PC-9 (cell line): ENCODE measurements at regions of chr19 and their contacts with region 1.

Region 1: GRCh38 chr19:43265664-43266025 is 3.7 kb downstream of the PSG9 start:
- DNase-seq: peak in 1 of 2 experiments; percentile 49
- H3K4me3 ChIP-seq: peak overlapping the region; percentile 12; the same call in 1 of the 2 replicates
- H3K27ac ChIP-seq: peak overlapping the region; percentile 99
- H3K4me1 ChIP-seq: peaks cover 48% of the 10 kb centered on the region
- H3K27me3 ChIP-seq: no peaks in the 10 kb centered on the region
- CTCF ChIP-seq: no peak

Region 2: DNA sequence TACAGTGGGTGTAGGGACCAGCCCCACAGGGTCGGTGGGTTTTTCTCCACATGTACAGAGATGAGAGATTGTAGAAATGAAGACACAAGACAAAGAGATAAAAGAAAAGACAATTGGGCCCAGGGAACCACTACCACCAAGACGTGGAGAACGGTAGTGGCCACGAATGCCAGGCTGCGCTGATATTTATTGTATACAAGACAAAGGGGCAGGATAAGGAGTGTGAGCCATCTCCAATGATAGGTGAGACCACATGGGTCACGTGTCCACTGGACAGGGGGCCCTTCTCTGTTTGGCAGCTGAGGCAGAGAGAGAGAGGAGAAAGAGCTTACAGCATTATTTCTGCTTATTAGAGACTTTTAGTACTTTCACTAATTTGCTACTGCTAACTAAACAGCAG is 74.5 kb before region 1 on chr19:
- CTCF ChIA-PET with region 1: interaction called, 3 read pairs
- POLR2A ChIA-PET with region 1: no interaction called
- intact Hi-C with region 1: loop called (anchors 2 kb)
- DNase-seq: no peak
- H3K4me3 ChIP-seq: no peak overlapping the region
- H3K27ac ChIP-seq: no peak overlapping the region
- H3K4me1 ChIP-seq: no peaks in the 10 kb centered on the region
- H3K27me3 ChIP-seq: no peaks in the 10 kb centered on the region
- CTCF ChIP-seq: no peak

Region 3: DNA sequence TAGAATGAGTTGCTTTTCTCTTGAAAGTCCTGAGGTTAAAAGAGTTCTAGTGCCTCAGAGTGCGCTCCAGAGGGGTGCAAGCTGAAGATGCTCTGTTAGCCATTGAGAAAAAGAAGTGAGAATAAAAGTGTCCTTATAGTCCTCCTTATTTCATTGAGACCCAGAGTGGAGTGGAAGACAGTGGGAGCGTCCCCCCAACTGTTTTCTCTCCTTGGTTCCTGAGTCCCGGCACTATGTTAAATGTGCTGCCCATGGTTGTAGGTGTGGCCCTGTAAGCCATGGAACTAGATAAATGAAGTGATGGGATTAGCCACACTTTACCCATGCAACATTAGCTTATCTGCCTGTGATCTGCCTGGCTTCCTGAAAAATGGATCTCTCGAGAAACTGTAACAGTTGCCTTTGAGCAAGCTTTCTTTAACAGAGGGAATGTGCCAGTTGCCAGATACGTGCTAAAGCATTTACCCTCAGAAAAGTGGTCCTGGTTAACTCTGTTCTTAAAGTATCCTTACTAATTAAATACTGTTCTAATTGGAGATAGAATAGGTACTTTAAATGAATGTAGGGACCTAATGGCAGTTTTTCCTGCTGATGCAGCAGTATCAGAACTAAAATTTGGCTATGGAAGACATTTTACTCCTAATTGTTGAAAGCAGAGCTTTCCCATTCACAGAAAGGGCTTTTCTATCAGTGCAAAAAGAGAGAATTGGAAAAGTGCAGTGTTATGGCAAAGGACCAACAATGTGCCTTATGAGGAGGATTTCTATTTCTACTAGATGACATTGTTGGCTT is 25.1 kb after region 1 on chr19:
- CTCF ChIA-PET with region 1: no interaction called
- POLR2A ChIA-PET with region 1: no interaction called
- intact Hi-C with region 1: no loop called
- DNase-seq: no peak
- H3K4me3 ChIP-seq: no peak overlapping the region
- H3K27ac ChIP-seq: no peak overlapping the region
- H3K4me1 ChIP-seq: peaks cover 5% of the 10 kb centered on the region; the same call in 1 of the 2 replicates
- H3K27me3 ChIP-seq: no peaks in the 10 kb centered on the region
- CTCF ChIP-seq: no peak

Region 4: GRCh38 chr19:43300876-43301765 is 35.5 kb after region 1 on chr19:
- CTCF ChIA-PET with region 1: no interaction called
- POLR2A ChIA-PET with region 1: no interaction called
- intact Hi-C with region 1: no loop called
- DNase-seq: peak; percentile 50 to 92
- H3K4me3 ChIP-seq: no peak overlapping the region
- H3K27ac ChIP-seq: peak overlapping the region; percentile 88
- H3K4me1 ChIP-seq: peaks cover 50% of the 10 kb centered on the region
- H3K27me3 ChIP-seq: no peaks in the 10 kb centered on the region
- CTCF ChIP-seq: no peak

Region 5: DNA sequence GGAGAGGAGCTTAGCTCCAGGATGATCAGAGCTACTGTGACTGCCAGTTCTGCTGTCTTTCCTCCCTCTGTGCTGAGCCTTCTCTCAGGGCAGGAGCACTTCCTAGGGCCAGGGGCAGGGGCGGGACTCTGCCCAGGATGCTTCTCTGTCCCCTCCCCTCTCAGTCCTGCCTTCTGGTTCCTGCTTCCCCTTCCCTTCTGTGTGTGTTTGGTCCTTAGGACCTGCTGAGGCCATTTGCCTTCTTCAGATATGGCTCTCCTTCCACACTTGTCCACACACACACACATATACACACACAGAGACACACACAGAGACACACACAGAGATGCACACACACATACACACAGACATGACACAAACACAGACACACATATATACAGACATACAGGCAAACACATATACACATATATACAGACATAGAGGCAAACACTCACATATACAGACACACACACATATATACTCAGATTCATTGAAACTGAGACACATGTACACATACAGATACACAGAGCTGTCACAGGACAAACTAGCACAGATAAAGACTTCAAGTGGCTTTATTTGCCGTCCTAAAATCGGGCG is 65.9 kb after region 1 on chr19:
- CTCF ChIA-PET with region 1: no interaction called
- POLR2A ChIA-PET with region 1: no interaction called
- intact Hi-C with region 1: loop called (anchors 5 kb)
- DNase-seq: no peak
- H3K4me3 ChIP-seq: peak overlapping the region; percentile 94; the same call in 1 of the 2 replicates
- H3K27ac ChIP-seq: no peak overlapping the region
- H3K4me1 ChIP-seq: peaks cover 40% of the 10 kb centered on the region
- H3K27me3 ChIP-seq: no peaks in the 10 kb centered on the region
- CTCF ChIP-seq: no peak

Region 6: DNA sequence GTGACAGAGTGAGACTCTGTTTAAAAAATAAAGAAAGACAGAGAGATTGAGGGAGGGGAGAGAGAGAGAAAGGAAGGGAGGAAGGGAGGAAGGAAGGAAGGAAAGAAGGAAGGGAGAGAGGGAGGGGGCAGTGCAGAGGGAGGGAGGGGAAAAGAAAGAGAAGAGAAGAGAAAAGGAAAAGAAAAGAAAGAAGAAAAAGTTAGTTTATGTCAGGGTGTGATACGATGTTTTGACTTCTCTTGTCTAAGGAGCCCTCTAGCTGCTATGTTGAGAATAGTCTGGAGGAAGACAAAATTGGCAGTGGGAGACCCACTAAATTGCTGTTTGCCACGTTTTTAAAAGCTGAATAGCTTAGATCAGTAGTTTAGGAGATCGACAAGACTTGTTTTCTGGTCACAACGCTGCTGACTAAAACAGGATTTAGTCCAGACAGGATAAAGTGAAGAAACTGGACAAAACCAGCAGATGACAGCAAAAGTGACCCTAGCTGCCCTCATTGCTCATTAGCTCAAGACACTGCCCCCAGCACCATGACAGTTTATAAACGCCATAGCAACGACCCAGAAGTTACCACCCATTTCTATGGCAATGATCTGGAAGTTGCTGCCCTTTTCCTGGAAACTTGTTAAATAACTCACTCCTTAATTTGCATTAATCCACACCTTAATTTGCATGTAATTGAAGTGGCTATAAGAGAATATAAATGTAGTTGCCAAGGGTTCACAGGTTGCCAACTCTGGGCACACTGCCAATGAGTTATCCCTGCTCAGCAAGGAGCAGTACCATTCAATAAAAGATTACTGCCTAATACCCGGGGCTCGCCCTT is 160.1 kb after region 1 on chr19:
- CTCF ChIA-PET with region 1: no interaction called
- POLR2A ChIA-PET with region 1: interaction called, 5 read pairs
- intact Hi-C with region 1: loop called (anchors 10 kb)
- DNase-seq: peak; percentile 35 to 58
- H3K4me3 ChIP-seq: no peak overlapping the region; the same call in 1 of the 2 replicates
- H3K27ac ChIP-seq: peak overlapping the region; percentile 44
- H3K4me1 ChIP-seq: peaks cover 48% of the 10 kb centered on the region
- H3K27me3 ChIP-seq: no peaks in the 10 kb centered on the region
- CTCF ChIP-seq: peak; percentile 82

Region 7: GRCh38 chr19:43675269-43675879 is 409.7 kb after region 1 on chr19:
- CTCF ChIA-PET with region 1: interaction called, 10 read pairs
- POLR2A ChIA-PET with region 1: no interaction called
- intact Hi-C with region 1: no loop called
- DNase-seq: peak; percentile 90 to 95
- H3K4me3 ChIP-seq: peak overlapping the region; percentile 47; the same call in 1 of the 2 replicates
- H3K27ac ChIP-seq: peak overlapping the region; percentile 99
- H3K4me1 ChIP-seq: peaks cover 46% of the 10 kb centered on the region
- H3K27me3 ChIP-seq: no peaks in the 10 kb centered on the region
- CTCF ChIP-seq: no peak